ENCODE measurements at regions of chr1 and their contacts with region 1.

Region 1: GRCh38 chr1:30801771-30802198 is 44.2 kb upstream of the LAPTM5 start:
- DNase-seq: peak; percentile 75
- H3K4me3 Mint-ChIP-seq: no peak overlapping the region
- H3K27ac Mint-ChIP-seq: no peak overlapping the region
- H3K4me1 Mint-ChIP-seq: peaks cover 50% of the 10 kb centered on the region
- H3K27me3 Mint-ChIP-seq: no peaks in the 10 kb centered on the region
- CTCF ChIP-seq: peak; percentile 94

Region 2: DNA sequence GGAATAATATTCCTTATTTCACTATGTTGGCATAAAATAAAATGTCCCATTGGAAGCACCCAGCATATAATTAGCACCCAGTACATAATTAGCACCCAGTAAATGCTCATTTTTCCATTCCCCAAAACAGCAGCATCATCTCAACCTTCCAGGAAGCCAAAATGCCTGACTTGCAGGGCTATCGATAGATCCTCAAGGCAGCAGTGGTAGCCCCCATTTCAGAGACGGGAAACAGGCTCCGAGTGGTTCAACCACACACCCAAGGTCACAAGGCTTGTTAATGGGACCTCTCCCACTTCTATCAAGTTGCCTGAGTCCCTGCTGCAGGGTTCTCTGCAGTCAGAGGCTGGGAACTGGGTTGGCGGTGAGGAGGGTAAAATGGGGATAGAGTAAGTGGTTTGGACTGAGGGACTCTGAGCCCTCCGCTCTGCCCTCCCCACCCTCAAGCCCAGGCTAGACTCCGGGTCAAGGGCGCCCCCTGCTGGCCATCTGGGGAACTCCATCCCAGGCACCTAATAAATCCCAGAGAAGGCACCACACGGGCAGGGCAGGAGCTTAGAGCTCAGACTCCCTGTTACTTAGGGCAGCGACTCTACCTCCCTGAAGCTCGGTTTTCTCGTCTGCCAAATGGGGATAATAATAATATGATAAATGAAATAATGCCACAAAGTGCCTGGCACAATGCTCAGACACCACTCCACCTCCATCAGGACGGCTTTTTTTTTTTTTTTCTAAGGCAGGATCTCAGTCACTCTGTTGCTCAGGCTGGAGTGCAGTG is 22.3 kb before region 1 on chr1:
- CTCF ChIA-PET with region 1: interaction called, 70 read pairs
- POLR2A ChIA-PET with region 1: interaction called, 9 read pairs
- intact Hi-C with region 1: no loop called
- DNase-seq: peak; percentile 80
- H3K4me3 Mint-ChIP-seq: no peak overlapping the region
- H3K27ac Mint-ChIP-seq: peak overlapping the region; percentile 14
- H3K4me1 Mint-ChIP-seq: peaks cover 30% of the 10 kb centered on the region
- H3K27me3 Mint-ChIP-seq: no peaks in the 10 kb centered on the region
- CTCF ChIP-seq: peak; percentile 94

Region 3: GRCh38 chr1:30823969-30824735 is 22.4 kb after region 1 on chr1:
- CTCF ChIA-PET with region 1: interaction called, 96 read pairs
- POLR2A ChIA-PET with region 1: interaction called, 6 read pairs
- intact Hi-C with region 1: no loop called
- DNase-seq: peak; percentile 99
- H3K4me3 Mint-ChIP-seq: peak overlapping the region; percentile 73
- H3K27ac Mint-ChIP-seq: peak overlapping the region; percentile 89
- H3K4me1 Mint-ChIP-seq: peaks cover 26% of the 10 kb centered on the region
- H3K27me3 Mint-ChIP-seq: no peaks in the 10 kb centered on the region
- CTCF ChIP-seq: no peak

Region 4: DNA sequence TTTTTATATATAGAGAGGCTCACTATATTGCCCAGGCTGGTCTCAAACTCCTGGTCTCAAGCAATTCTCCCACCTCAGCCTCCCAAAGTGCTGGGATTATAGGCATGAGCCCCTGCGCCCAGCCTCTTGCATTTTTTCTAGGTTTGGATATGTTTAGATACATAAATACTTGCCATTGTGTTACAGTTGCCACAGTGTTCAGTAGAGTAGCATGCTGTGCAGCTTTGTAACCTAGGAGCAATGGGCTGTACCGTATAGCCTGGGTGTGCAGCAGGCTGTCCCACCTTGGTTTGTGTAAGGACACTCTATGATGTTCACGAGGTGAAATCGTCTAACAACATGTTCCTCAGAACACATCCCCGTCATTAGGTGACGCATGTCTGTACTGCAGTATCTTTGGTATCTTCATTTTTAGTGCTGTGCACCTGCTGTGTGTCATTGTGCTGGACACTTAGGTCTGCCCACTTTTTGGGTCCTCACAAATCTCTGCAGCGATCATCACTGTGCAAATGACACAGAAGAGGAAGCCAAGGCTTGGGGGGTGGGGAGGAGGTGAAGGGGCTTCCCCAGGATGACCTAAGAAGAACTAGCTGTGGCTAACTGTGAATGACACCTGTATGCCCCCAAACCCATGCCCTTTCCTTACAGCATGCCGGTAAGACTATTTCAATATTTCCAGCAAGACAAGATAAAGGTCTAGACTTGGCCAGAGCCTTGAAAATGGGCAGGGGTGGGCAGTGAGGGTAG is 62.2 kb after region 1 on chr1:
- CTCF ChIA-PET with region 1: interaction called, 15 read pairs
- POLR2A ChIA-PET with region 1: no interaction called
- intact Hi-C with region 1: no loop called
- DNase-seq: no peak
- H3K4me3 Mint-ChIP-seq: no peak overlapping the region
- H3K27ac Mint-ChIP-seq: no peak overlapping the region
- H3K4me1 Mint-ChIP-seq: peaks cover 6% of the 10 kb centered on the region
- H3K27me3 Mint-ChIP-seq: no peaks in the 10 kb centered on the region
- CTCF ChIP-seq: no peak

Region 5: DNA sequence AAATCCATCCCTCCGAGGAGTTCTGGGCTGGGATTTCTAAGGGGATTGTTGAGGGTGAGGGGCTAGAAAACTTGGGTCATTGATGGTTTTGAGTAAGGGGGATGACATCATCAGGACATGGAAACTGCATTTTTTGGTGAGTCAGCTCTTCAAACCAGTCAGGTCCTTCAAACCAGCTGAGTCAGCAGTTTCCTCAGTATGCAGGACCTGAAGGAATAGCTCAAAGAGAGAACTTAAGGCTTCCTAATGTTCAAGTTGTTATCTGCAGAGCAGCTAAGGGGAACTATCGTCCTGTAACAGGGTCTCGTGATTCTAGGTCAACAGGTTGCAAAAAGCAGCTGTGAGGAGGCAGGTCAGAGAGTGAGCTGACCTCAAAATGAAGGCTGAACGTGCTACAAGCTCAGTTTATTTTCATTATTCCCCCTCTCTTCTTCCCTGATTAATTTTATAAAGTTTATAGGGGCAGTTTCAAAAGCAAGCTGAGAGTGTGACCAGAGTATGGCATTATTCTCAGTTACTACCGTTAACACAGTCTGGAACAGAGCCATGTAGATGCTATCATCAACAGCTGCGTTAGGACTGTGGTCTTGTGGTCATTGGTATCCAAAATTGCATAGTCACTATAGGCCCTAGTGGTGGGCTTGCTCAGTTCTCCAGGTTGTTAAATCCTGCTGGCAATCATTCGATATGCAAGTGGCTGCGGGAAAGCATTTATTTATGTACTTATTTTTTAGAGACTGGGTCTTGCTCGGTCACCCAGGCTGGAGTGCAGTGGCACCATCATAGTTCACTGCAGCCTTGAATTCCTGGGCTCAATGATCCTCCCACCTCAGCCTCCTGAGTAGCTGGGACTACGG is 117.5 kb after region 1 on chr1:
- CTCF ChIA-PET with region 1: interaction called, 494 read pairs
- POLR2A ChIA-PET with region 1: interaction called, 3 read pairs
- intact Hi-C with region 1: no loop called
- DNase-seq: peak; percentile 62
- H3K4me3 Mint-ChIP-seq: no peak overlapping the region
- H3K27ac Mint-ChIP-seq: no peak overlapping the region
- H3K4me1 Mint-ChIP-seq: no peaks in the 10 kb centered on the region
- H3K27me3 Mint-ChIP-seq: no peaks in the 10 kb centered on the region
- CTCF ChIP-seq: no peak

Measured in MCF 10A (cell line).